ENCODE measurements at regions of chr14 and their contacts with region 1.

Region 1: DNA sequence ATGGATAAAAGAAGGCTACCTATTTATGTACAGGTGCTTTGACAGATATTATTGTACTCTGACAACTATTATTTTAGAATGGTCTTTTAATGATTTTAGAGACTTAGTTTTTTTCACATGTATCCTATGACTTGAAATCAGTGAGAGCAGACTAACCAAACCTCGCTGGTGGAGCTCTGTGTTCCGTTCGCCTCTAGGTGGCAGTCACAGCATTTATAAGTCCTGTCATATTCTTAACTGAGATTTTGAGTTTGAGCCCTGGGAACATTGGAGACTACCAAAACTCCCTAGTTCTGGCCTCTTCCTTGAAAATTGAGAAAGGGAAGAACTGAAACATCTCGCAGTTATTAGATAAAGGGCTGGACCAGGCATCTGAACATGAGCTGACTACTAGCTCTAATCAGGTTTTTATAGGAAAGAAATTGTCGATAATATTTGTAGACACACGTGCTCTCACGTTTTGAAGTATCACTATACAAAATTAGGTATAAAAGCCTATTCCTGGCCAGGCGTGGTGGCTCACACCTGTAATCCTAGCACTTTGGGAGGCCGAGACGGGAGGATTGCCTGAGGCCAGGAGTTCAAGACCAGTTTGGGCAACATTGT is 48.3 kb downstream of the TTLL5 start:
- DNase-seq: peak; percentile 41 to 93 (median 79)
- H3K4me3 ChIP-seq: no peak overlapping the region
- H3K27ac ChIP-seq: peak overlapping the region in 20 of 59 donors; percentile 1 to 98 (median 22)
- H3K27me3 ChIP-seq: no peaks in the 10 kb centered on the region
- CTCF ChIP-seq: peak; percentile 65 to 95 (median 87)

Region 2: GRCh38 chr14:75660630-75661494 is 48.4 kb before region 1 on chr14 and contains the starts of genes ERG28 and TTLL5:
- intact Hi-C with region 1: loop called in 1 of 2 experiments (anchors 5 kb)
- DNase-seq: peak; percentile 90 to 99 (median 97)
- H3K4me3 ChIP-seq: peak within 1 kb of the TSS; percentile 65 to 100 (median 97)
- H3K27ac ChIP-seq: peak within 1 kb of the TSS; percentile 41 to 95 (median 89)
- H3K27me3 ChIP-seq: no peaks in the 10 kb centered on the region
- CTCF ChIP-seq: peak in 33 of 56 donors; percentile 4 to 56 (median 20)
- total RNA-seq, gene ERG28: 10.2 to 21.8 (median 14.5) TPM
- total RNA-seq, gene TTLL5: 36.5 to 74.0 (median 53.7) TPM

Region 3: DNA sequence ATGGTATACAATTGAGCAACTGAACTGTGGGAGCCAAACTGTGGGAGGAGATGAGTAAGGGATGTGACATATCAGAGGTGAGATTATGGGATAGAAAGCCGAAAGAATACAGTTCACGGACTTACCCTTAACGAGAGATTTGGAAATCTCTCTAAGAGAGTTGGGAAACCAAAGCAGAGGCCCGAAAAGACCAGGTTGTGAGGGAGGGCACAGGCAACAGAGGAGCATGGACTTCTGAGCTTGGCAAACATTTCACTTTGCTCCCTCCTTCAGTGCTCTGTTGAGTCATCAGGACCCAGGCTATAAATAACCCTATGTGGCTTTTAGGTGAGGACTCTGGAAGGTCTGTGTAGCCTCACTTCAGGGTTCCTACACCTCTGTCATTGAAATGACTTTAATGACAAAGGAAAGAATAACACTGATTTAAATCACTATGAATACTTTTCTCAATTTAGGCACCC is 151.9 kb after region 1 on chr14:
- intact Hi-C with region 1: loop called (anchors 5 kb)
- DNase-seq: no peak
- H3K4me3 ChIP-seq: no peak overlapping the region
- H3K27ac ChIP-seq: no peak overlapping the region
- H3K27me3 ChIP-seq: no peaks in the 10 kb centered on the region
- CTCF ChIP-seq: no peak

Region 4: DNA sequence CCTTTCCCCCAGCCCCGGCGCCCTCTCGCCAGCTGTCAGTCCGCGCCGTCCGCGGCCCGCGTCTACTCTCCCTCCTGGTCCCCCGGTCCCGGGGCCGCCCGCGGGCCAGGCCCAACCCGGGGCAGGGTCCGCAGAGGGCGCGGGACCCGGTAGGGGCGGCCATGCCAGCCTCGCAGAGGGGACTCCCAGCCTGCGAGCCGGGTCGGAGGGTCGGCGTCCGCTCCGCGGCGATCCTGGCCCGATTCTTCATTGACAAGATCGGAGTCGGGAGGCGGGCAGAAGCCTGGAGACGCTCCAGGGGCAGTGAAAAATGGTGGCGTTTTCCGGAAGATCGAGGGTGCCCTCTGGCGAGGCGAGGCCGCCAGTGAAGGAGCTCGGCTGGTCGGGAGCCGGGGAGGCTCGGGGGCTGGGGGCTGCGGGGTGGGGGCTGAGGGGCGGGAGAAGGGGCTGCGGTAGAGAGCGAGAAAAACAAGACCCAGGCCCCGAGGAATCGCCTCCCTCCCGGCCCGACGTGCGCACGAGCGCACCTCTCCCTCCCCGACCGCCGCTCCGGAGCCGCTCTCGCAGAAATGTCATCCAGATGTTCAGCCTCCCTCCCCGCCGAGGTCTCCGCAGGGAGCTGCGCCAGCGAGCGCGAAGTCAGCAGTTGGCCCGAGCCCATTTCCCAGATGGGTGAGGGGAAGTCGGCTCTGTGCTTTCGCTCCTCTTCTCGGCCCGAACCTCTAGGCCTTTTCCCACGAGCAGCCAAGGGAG is 273.1 kb after region 1 on chr14:
- intact Hi-C with region 1: loop called (anchors 1 kb)
- DNase-seq: peak; percentile 77 to 89 (median 83)
- H3K4me3 ChIP-seq: peak overlapping the region; percentile 53 to 86 (median 78)
- H3K27ac ChIP-seq: peak overlapping the region; percentile 75 to 99 (median 96)
- H3K27me3 ChIP-seq: no peaks in the 10 kb centered on the region
- CTCF ChIP-seq: peak in 55 of 56 donors; percentile 41 to 86 (median 70)

Region 5: DNA sequence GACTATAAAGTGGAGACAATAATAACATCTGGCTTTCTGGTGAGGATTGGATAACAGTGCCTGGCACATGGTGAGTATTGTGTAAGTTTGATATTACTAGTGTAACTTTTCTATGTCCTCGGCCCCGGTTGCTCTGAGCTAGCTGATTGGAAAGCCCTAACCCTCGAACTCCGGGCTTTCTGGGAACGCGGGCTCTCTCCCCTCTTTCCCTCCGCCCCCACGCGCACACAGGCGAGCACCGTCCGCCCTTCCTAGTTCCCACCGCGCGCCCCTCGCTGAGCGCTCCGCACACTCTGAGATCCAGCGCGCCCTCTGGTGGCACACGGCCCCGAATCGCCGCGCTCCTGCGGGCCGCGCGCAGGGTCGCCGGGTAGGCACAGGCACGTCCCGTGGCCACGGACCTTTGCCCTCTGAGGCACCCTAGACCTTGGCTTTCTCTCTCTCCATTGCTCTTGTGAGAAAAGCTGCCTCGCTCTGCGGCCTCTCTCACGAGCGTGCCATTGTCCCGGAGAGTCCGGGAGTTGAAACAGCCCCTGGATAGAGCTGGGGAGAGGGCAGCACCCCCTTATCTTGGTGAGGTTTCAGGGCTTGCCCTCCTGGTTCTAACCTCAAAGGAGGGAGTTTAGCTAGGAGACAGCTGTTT is 643.5 kb after region 1 on chr14:
- intact Hi-C with region 1: loop called in 1 of 2 experiments (anchors 5 kb)
- DNase-seq: peak in 6 of 10 donors; percentile 20 to 71 (median 36)
- H3K4me3 ChIP-seq: peak overlapping the region in 55 of 59 donors; percentile 1 to 60 (median 35)
- H3K27ac ChIP-seq: no peak overlapping the region
- H3K27me3 ChIP-seq: peaks cover 0 to 22% (median 0%) of the 10 kb centered on the region in 45 donors
- CTCF ChIP-seq: peak; percentile 49 to 95 (median 86)